ENCODE measurements at regions of chr4 and their contacts with region 1.

Region 1: DNA sequence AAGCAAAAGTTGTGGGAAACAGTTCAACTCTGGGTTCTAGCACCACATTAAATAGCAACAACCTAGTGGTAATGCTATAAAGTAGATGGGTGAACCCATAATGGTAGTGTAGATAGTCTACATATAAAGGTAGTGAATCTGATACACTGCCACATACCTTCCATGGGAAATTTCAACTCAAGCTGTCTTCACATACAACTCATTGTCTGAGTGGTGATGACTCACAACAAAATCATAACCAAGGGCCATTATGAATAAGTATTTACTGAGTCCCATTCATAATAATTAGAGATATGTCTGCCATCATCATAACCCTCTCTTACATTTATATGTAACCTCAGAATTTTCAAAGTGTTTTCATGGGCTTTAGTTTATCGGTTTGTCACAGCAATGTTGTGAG is 34.8 kb downstream of the EGF start:
- DNase-seq: no peak
- ATAC-seq: peak; percentile 85
- H3K4me3 Mint-ChIP-seq: no peak overlapping the region
- H3K27ac Mint-ChIP-seq: peak overlapping the region; percentile 74
- H3K4me1 Mint-ChIP-seq: peaks cover 54% of the 10 kb centered on the region
- H3K27me3 Mint-ChIP-seq: peaks cover 2% of the 10 kb centered on the region

Region 2: DNA sequence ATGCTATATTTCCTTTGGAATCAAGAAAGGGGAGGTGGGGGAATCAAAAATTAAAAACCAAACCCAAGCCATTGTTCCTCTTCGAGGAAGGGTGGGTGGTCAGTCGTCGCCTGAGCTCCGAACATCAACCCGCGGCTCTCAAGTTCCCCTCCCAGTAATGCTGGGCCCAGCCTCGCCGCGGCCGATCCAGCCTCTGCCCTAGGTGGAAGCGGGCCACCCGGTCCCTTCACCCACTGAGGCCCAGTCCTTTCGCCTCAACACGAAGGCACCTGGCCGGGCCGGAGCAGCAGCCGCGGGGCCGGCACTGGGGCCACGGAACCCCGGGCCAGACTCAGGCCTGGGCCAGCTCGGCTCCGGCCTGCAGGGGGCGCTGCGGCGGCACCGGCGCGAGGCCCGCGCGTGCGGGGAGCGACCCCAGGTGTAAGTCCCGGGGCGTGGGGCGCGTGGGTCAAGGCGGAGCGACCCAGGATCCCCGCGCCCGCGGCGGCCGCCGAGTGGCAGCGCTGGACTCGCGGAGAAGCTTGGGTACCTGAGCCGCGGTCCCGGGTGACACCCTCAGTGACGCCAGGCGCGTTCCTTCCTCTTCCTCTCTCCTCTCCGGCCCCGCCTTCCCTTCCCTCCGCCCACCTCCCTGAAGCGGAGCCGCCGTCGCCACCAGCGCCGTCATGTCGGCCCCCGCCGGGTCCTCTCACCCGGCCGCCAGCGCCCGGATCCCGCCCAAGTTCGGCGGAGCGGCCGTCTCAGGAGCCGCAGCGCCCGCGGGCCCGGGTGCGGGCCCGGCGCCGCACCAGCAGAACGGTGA is 514.1 kb before region 1 on chr4 and contains the start of gene SEC24B:
- CTCF ChIA-PET with region 1: no interaction called
- POLR2A ChIA-PET with region 1: no interaction called
- intact Hi-C with region 1: loop called in 1 of 2 experiments (anchors 1 kb)
- DNase-seq: peak; percentile 94
- ATAC-seq: peak; percentile 82
- H3K4me3 Mint-ChIP-seq: peak within 1 kb of the TSS; percentile 83
- H3K27ac Mint-ChIP-seq: peak within 1 kb of the TSS; percentile 93
- H3K4me1 Mint-ChIP-seq: peaks cover 61% of the 10 kb centered on the region
- H3K27me3 Mint-ChIP-seq: no peaks in the 10 kb centered on the region
- total RNA-seq, gene SEC24B: 24.6 to 35.9 TPM

Region 3: GRCh38 chr4:109559983-109560686 is 387.3 kb before region 1 on chr4 and contains the start of gene MCUB:
- CTCF ChIA-PET with region 1: no interaction called
- POLR2A ChIA-PET with region 1: no interaction called
- intact Hi-C with region 1: loop called (anchors 1 to 10 kb)
- DNase-seq: peak; percentile 96
- ATAC-seq: peak; percentile 89
- H3K4me3 Mint-ChIP-seq: peak within 1 kb of the TSS; percentile 86
- H3K27ac Mint-ChIP-seq: peak within 1 kb of the TSS; percentile 97
- H3K4me1 Mint-ChIP-seq: peaks cover 49% of the 10 kb centered on the region
- H3K27me3 Mint-ChIP-seq: no peaks in the 10 kb centered on the region
- total RNA-seq, gene MCUB: 58.2 to 80.1 TPM

Region 4: DNA sequence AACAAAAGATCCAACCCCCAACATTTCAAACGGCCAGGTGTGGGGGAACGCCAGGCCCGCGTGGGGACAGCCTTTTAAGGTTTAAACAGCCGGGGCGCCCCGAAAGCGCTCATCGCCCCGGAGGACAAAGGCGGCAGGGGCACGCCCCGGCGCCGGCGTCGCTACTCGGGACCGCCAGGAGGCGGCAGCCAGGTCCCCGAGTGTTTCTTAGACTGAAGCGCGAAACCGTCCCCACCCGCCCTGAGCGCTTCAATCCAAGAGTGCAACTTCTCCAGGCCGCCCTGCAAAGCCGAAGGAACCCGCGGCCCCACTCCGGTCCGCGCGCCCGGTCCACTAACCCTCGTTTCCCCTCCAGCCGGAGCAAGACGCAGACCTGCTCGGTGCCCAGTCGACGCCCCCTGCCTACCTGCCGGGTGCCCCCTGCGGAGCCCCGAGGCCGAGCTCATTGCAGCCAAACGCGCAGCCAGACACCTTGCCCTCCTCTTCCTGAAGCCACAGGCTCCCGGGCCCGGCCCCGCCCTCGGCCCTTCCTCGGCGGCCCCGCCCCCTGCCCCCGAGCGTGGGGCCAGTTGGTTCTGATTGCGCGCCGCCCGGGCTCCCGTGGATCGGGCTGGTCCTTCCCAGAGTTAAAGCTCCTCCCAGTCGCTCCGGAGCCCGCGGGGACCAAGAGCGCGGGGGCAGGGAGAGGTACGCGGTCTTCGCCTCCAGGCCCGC is 244.3 kb before region 1 on chr4 and contains the start of gene CASP6:
- CTCF ChIA-PET with region 1: no interaction called
- POLR2A ChIA-PET with region 1: no interaction called
- intact Hi-C with region 1: loop called in 1 of 2 experiments (anchors 10 kb)
- DNase-seq: peak; percentile 86
- ATAC-seq: peak; percentile 83
- H3K4me3 Mint-ChIP-seq: peak within 1 kb of the TSS; percentile 89
- H3K27ac Mint-ChIP-seq: peak within 1 kb of the TSS; percentile 78
- H3K4me1 Mint-ChIP-seq: peaks cover 35% of the 10 kb centered on the region
- H3K27me3 Mint-ChIP-seq: no peaks in the 10 kb centered on the region
- total RNA-seq, gene CASP6: 23.3 to 26.5 TPM

Region 5: DNA sequence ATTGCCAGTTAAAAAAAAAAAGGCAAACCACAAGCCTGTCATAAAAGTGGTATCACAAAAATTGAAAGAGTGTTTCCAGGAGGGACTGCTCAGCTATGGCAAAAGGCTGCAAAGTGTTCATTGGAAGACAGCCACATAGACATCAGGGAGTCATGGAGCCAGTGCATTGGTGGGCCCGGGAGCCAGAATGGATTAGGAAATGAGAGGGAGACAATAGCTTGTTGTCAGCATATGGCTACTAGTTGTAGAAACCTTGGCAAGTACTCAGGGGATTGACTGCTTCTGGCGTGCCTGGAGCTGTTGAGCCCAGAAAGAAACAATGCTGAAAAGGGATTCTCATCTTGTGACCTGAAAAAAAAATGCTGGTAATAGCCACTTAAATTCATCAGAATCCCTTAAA is 126.9 kb before region 1 on chr4:
- CTCF ChIA-PET with region 1: interaction called, 3 read pairs
- POLR2A ChIA-PET with region 1: no interaction called
- intact Hi-C with region 1: loop called (anchors 2 to 10 kb)
- DNase-seq: no peak
- ATAC-seq: no peak
- H3K4me3 Mint-ChIP-seq: peak overlapping the region; percentile 5
- H3K27ac Mint-ChIP-seq: peak overlapping the region; percentile 80
- H3K4me1 Mint-ChIP-seq: peaks cover 62% of the 10 kb centered on the region
- H3K27me3 Mint-ChIP-seq: no peaks in the 10 kb centered on the region

Region 6: GRCh38 chr4:110087070-110087708 is 139.7 kb after region 1 on chr4:
- CTCF ChIA-PET with region 1: no interaction called
- POLR2A ChIA-PET with region 1: no interaction called
- intact Hi-C with region 1: loop called (anchors 1 to 5 kb)
- DNase-seq: peak; percentile 12
- ATAC-seq: peak; percentile 40
- H3K4me3 Mint-ChIP-seq: no peak overlapping the region
- H3K27ac Mint-ChIP-seq: peak overlapping the region; percentile 96
- H3K4me1 Mint-ChIP-seq: peaks cover 68% of the 10 kb centered on the region
- H3K27me3 Mint-ChIP-seq: no peaks in the 10 kb centered on the region

Region 7: GRCh38 chr4:111475001-111475400 is 1527.5 kb after region 1 on chr4:
- CTCF ChIA-PET with region 1: no interaction called
- POLR2A ChIA-PET with region 1: no interaction called
- intact Hi-C with region 1: no loop called
- DNase-seq: no peak
- ATAC-seq: no peak
- H3K4me3 Mint-ChIP-seq: no peak overlapping the region
- H3K27ac Mint-ChIP-seq: no peak overlapping the region
- H3K4me1 Mint-ChIP-seq: no peaks in the 10 kb centered on the region
- H3K27me3 Mint-ChIP-seq: no peaks in the 10 kb centered on the region